ENCODE measurements at regions of chr20 and their contacts with region 1.

Region 1: GRCh38 chr20:478949-479429 is 16.7 kb upstream of the TBC1D20 start:
- DNase-seq: peak; percentile 65
- ATAC-seq: peak; percentile 62
- H3K4me3 Mint-ChIP-seq: no peak overlapping the region
- H3K27ac Mint-ChIP-seq: peak overlapping the region; percentile 58
- H3K4me1 Mint-ChIP-seq: peaks cover 46% of the 10 kb centered on the region
- H3K27me3 Mint-ChIP-seq: no peaks in the 10 kb centered on the region

Region 2: DNA sequence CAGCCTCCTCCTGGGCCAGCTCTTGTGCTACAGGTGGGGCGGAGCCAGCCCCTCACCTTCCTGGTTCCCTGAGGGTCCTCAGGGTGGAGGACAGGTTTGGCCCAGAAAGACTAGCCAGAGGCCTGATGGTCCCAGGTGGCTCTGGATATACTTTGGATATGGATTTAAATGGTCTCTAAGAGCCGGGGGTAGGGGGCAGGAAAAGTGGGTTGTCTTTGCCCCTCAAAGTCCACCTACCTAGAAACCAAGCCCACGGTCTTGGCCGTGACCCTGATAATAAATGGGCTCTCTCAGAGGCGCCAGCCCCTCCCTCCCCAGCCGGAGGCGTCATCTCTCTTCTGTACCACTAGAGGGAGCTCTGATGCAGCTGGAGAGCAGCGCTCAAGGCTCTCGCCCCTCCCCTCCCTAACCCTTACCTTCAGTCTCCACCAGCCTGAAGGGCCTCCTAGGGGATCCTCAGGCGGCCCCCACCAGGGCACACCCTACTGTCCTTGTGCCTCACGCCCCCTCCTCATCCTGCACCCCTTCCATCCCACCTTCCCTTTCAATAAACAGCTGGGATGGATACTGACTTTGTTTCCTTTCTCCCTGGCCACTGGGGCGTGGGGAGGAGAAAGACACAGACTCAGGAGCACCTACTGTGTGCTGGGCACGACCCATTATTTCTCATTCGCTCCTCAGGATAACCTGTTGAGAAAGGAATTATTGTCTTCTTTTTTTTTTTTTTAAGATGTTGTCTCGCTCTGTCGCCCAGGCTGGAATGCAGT is 124.5 kb before region 1 on chr20:
- CTCF ChIA-PET with region 1: interaction called, 29 read pairs
- POLR2A ChIA-PET with region 1: no interaction called
- DNase-seq: peak; percentile 87
- ATAC-seq: peak; percentile 98
- H3K4me3 Mint-ChIP-seq: no peak overlapping the region
- H3K27ac Mint-ChIP-seq: no peak overlapping the region
- H3K4me1 Mint-ChIP-seq: peaks cover 28% of the 10 kb centered on the region
- H3K27me3 Mint-ChIP-seq: peaks cover 4% of the 10 kb centered on the region

Region 3: DNA sequence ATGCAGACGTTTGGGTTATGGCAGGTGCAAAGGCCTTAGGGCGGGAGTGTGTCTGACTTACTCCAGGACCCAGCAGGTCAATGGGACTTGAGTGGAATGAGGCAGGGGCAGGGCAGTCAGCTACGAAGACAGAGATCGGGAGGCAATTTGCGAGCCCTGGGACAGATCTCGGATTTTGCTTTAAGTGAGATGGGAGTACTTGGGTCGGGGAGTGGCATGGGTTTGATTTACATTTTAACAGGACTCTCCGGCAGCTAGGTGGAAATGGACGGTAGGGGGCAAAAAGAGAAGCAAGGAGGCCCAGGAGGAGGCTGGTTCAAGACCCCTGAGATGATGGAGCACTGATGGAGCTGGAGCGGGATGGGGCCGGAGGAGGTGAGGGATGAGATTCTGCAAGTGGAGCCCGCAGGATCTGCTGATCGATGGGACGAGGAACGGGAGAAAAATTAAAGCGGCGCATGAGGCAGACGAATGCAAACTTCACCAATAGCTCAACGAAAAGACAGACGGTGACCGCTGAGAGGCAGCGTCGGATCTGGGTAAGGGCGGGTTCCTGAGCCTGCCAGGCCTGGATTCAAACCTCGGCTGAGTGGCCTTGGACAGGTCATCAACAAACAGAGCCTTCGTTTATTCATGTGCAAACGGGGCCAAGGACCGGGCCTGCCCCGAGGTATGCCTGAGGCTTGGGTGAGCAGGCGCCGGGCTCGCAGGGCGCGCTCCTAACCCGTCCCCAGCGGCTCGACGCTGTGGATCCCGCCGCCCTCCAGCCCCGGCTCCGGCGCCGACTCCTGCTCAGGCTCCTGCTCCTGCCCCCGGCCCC is 71.6 kb before region 1 on chr20:
- CTCF ChIA-PET with region 1: interaction called, 13 read pairs
- POLR2A ChIA-PET with region 1: interaction called, 5 read pairs
- DNase-seq: peak; percentile 77
- ATAC-seq: peak; percentile 86
- H3K4me3 Mint-ChIP-seq: peak overlapping the region; percentile 85
- H3K27ac Mint-ChIP-seq: peak overlapping the region; percentile 98
- H3K4me1 Mint-ChIP-seq: peaks cover 56% of the 10 kb centered on the region
- H3K27me3 Mint-ChIP-seq: no peaks in the 10 kb centered on the region

Region 4: DNA sequence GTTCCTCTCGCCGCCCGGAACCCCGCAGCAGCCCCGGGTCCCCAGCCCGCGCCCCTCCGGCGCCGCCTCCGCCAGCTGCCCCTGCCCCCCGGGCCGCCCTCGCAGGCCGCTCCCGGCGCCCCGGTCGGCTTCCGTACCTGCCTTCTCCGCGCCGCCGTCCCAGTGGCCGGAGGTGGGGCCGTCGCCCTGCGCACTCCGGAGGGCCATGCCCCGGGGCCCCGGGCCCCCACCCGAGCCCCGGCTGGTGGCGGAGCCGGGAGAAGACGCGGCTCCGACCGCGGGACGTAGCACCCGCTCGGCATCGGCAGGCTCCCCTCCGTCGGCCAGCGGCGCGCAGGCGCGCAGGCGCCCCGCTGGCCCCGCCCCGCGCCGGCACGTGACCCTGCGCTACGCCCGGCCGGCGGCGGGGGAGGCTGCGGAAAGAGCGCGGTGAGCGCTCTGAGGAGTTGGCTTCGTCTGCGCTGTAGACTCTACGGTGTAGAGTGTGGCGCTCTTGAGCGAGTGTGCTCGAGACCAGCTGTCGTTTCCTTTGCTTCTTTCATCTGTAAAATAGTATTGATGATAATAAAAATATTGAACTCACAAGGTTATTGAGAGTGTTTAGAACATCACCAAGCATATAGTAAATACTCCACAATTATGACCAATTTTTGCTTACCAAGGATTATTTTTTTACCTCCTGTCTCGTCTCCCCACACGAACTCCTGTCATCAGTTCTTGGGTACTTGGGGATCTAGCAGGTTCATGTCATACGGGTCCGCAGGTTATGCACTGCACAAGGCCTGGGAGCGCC is 16.6 kb before region 1 on chr20 and contains the start of gene TBC1D20:
- CTCF ChIA-PET with region 1: interaction called, 11 read pairs
- POLR2A ChIA-PET with region 1: interaction called, 4 read pairs
- DNase-seq: peak; percentile 89
- ATAC-seq: peak; percentile 98
- H3K4me3 Mint-ChIP-seq: peak within 1 kb of the TSS; percentile 87
- H3K27ac Mint-ChIP-seq: peak within 1 kb of the TSS; percentile 91
- H3K4me1 Mint-ChIP-seq: peaks cover 45% of the 10 kb centered on the region
- H3K27me3 Mint-ChIP-seq: peaks cover 4% of the 10 kb centered on the region
- total RNA-seq, gene TBC1D20: 30.1 to 30.7 TPM

Region 5: DNA sequence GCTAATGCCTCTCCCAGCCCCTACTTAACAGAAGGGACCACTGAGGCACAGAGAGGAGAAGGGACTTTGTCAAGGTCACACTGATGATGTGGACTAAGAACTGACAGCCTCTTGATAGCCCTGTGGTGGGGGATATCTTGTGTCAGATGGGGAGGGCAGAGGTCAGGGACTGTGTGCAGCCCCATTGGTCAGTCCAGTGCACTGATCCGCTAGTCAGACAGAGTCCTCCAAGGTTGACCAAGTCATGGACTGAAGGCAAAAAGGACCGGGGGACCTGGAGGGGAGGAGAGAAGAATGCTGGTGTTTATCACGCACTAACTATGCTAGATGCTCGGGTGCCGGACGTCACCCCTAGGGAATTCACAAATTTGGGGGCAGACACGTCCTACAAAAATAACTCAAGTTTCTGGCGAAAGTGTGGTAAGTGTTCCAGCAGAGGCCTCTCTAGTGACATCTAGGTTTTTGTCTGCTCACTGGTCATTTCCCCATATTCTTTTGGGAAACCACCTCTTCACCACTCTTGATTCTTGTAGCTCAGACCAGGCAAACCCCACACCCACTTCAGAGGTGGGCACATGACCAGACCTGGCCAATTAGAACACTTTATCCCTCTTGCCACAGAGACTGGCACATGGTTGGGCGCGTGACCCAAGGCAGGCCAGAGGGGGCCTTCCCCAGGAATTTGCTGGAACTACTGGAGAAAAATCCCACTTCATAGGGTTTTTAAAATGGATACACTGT is 110.1 kb after region 1 on chr20:
- CTCF ChIA-PET with region 1: no interaction called
- POLR2A ChIA-PET with region 1: no interaction called
- DNase-seq: no peak
- ATAC-seq: no peak
- H3K4me3 Mint-ChIP-seq: no peak overlapping the region
- H3K27ac Mint-ChIP-seq: no peak overlapping the region
- H3K4me1 Mint-ChIP-seq: no peaks in the 10 kb centered on the region
- H3K27me3 Mint-ChIP-seq: peaks cover 1% of the 10 kb centered on the region

Measured in activated CD8-positive, alpha-beta T cell treated with anti-CD3 and anti-CD28 coated beads, Interleukin-2, amount 10 ng/mL, durations not matched to agents 7 days and 5 days (primary cell).